ENCODE measurements at regions of chr5 and their contacts with region 1.

Region 1: GRCh38 chr5:172502969-172503368 is 48.6 kb upstream of the SH3PXD2B start:
- DNase-seq: peak in 1 of 2 donors; percentile 10
- ATAC-seq: no peak
- H3K4me3 ChIP-seq: no peak overlapping the region
- H3K27ac ChIP-seq: peak overlapping the region in 3 of 4 donors; percentile 70 to 77 (median 71)
- H3K4me1 ChIP-seq: peaks cover 14 to 15% of the 10 kb centered on the region in 2 donors
- H3K27me3 ChIP-seq: no peaks in the 10 kb centered on the region
- CTCF ChIP-seq: no peak
- POLR2A ChIP-seq: no peak

Region 2: DNA sequence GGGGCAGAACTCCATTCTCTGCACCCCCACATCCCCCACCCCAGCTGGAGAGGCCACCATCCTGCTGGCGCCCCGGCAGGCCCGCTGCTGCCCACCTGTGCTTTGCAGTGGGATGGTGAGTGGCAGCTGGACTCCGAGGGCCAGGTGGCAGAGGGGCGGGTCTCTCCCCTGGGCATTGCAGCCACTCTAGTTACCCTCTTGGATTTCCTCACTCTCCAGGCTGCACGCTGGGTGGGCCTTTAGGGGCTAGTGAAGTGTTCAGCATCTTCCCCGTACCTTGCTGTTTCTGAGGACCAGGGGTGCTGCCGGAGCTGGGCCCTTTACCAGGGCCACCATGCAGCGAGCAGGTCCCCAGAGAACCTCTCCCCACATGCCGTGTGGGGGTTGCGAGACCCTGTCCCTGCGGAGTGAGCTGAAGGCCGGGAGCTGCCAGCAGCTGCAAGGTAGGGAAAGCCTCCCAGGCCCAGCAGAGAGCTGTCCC is 39.7 kb after region 1 on chr5:
- in situ Hi-C with region 1: no loop called
- intact Hi-C with region 1: loop called (anchors 2 kb)
- DNase-seq: no peak
- ATAC-seq: no peak
- H3K4me3 ChIP-seq: no peak overlapping the region
- H3K27ac ChIP-seq: no peak overlapping the region
- H3K4me1 ChIP-seq: no peaks in the 10 kb centered on the region
- H3K27me3 ChIP-seq: no peaks in the 10 kb centered on the region
- CTCF ChIP-seq: no peak
- POLR2A ChIP-seq: no peak

Region 3: GRCh38 chr5:172583931-172584511 is 81.1 kb after region 1 on chr5:
- in situ Hi-C with region 1: no loop called
- intact Hi-C with region 1: loop called (anchors 10 kb)
- DNase-seq: peak; percentile 35 to 68
- ATAC-seq: peak; percentile 71 to 81
- H3K4me3 ChIP-seq: no peak overlapping the region
- H3K27ac ChIP-seq: peak overlapping the region; percentile 73 to 83 (median 78)
- H3K4me1 ChIP-seq: peaks cover 14 to 37% of the 10 kb centered on the region in 2 donors
- H3K27me3 ChIP-seq: no peaks in the 10 kb centered on the region
- CTCF ChIP-seq: no peak
- POLR2A ChIP-seq: no peak

Region 4: DNA sequence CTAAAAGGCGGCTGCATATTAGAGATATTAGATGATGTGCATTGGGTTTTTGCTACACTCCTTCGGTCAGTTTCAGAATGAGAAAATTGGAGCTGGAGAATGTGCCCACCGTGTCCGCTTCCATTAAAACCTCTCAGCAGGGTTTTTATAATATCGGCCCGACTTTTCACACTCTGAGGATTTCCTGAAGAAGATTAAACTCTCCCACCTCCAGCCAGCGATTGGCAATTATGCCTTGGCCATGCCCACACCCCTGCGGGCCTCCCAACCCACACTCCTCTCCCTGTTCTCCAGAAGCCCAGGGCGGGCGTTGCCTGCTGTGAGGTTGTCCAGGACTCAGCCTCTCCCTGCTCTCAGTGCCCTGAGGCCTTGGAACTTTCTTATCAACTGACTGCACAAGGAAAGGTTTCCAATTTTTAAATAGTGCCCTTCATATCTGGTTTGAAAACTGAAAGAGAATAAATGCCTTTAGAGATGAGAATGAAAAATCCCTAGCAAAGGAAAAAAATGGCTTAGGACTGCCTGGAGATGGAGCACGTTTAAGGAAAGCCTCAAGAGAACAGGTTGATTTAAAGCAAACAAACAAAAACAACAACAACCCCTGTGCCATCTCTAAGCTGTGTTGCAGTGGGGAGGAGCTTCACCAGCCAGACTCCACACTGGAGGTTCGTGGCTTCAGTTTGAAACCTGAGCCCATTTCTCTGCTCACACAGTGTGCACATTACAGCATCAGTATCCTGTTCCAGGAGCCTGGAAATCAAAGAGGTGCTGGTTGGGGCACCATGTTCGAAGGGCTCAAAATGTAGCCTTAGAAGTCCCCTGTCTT is 1835.4 kb after region 1 on chr5:
- in situ Hi-C with region 1: no loop called
- intact Hi-C with region 1: no loop called
- DNase-seq: no peak
- ATAC-seq: no peak
- H3K4me3 ChIP-seq: no peak overlapping the region
- H3K27ac ChIP-seq: no peak overlapping the region
- H3K4me1 ChIP-seq: no peaks in the 10 kb centered on the region
- H3K27me3 ChIP-seq: peaks cover 0 to 13% (median 12%) of the 10 kb centered on the region in 3 donors
- CTCF ChIP-seq: no peak
- POLR2A ChIP-seq: no peak

Measured in gastrocnemius medialis (tissue), 4 donors.